ENCODE measurements at regions of chr6 and their contacts with region 1.

Region 1: GRCh38 chr6:144063744-144064401 is 31.5 kb downstream of the SF3B5 start:
- DNase-seq: peak; percentile 86
- H3K4me3 Mint-ChIP-seq: peak overlapping the region; percentile 75
- H3K27ac Mint-ChIP-seq: peak overlapping the region; percentile 43
- H3K4me1 Mint-ChIP-seq: peaks cover 40% of the 10 kb centered on the region
- H3K27me3 Mint-ChIP-seq: no peaks in the 10 kb centered on the region

Region 2: DNA sequence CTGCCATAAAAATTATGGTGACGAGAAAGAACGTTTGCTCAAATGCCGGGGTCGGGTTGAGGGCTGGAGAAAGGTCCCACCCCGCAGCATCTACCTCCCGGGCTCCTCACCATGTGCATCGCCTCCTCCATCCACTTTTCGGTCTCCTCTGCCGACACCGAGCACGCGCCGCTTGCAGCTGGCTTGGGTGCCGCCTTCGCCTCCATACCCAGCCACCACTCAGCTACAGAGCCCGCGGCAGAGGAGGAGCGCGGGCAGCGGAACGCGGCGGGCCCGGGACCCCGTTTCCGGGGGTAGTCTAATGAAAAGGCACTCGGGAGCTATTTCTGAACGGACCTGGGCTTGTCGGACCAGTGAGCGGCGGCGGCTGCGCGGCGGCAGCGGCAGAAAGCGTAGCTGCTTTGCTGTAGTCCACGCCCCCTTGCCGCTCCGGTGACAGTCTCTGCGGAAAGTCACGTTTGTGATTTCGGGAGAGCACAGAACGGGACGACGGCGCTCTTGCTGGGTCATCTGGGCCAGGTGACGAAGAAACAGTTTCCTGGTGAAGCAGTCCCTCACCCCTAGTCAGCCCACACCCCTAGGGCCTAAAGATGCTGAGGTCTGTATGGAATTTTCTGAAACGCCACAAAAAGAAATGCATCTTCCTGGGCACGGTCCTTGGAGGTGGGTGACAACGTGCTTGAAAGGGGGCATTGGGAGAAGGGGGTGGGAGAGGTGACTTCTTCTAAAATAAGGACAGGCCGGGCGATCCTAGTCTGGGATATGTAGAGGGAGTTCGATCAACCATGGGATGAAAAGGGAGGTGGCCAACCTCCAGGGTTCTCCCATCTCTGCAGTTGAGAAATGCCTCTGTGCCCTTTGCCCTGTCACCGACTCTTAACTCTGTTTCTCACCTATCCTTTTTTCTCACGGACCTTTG is 613.2 kb before region 1 on chr6 and contains the starts of genes ADAT2 and PEX3:
- CTCF ChIA-PET with region 1: no interaction called
- intact Hi-C with region 1: loop called (anchors 5 kb)
- DNase-seq: peak; percentile 96
- H3K4me3 Mint-ChIP-seq: peak within 1 kb of the TSS; percentile 100
- H3K27ac Mint-ChIP-seq: peak within 1 kb of the TSS; percentile 97
- H3K4me1 Mint-ChIP-seq: peaks cover 50% of the 10 kb centered on the region
- H3K27me3 Mint-ChIP-seq: no peaks in the 10 kb centered on the region
- total RNA-seq, gene ADAT2: 36.8 to 39.5 TPM
- total RNA-seq, gene PEX3: 10.8 to 11.9 TPM

Region 3: GRCh38 chr6:144008120-144008811 is 55.6 kb before region 1 on chr6 and contains the start of gene PLAGL1:
- CTCF ChIA-PET with region 1: no interaction called
- intact Hi-C with region 1: no loop called
- DNase-seq: peak; percentile 17
- H3K4me3 Mint-ChIP-seq: peak within 1 kb of the TSS; percentile 67
- H3K27ac Mint-ChIP-seq: no peak within 1 kb of the TSS
- H3K4me1 Mint-ChIP-seq: peaks cover 8% of the 10 kb centered on the region
- H3K27me3 Mint-ChIP-seq: peaks cover 15% of the 10 kb centered on the region
- total RNA-seq, gene PLAGL1: 10.0 to 11.7 TPM

Region 4: DNA sequence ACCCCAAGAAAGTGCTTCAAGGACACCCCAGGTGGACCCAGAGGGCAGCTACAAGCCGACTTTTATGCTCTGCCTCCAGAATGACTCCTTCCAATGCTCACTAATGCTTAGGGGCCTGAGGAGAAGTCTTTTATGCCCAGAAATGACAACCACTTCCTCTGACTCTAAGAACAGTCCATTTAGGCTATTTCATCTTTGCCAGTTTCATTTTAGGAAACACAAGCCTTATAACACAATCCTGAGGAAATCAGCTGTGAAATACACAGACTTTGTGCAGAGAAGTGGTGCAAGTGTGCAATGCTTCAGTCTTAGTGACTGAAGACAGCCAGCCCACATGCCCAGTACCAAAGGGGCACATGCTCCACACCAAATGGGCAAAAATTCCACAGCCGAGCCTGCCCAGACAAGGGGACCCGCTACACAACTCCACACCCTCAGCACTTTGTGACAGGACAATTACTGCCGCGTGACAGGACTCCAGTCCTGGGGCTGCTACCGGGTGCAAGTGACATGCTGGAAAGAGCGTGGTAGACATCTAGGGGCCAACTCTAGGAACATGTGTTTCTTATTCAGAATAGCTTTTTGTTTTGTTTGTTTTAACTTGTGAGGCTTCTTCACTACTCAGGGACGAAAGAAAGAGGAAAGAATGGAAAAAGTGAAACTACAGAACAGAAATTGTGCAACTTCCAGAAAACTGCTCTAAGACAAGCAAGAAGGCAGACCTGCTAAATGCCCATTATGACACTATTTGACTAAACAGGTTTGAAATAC is 27.6 kb before region 1 on chr6:
- CTCF ChIA-PET with region 1: interaction called, 3 read pairs
- intact Hi-C with region 1: loop called (anchors 1 kb)
- DNase-seq: peak; percentile 50
- H3K4me3 Mint-ChIP-seq: peak overlapping the region; percentile 30
- H3K27ac Mint-ChIP-seq: no peak overlapping the region
- H3K4me1 Mint-ChIP-seq: peaks cover 14% of the 10 kb centered on the region
- H3K27me3 Mint-ChIP-seq: no peaks in the 10 kb centered on the region

Region 5: DNA sequence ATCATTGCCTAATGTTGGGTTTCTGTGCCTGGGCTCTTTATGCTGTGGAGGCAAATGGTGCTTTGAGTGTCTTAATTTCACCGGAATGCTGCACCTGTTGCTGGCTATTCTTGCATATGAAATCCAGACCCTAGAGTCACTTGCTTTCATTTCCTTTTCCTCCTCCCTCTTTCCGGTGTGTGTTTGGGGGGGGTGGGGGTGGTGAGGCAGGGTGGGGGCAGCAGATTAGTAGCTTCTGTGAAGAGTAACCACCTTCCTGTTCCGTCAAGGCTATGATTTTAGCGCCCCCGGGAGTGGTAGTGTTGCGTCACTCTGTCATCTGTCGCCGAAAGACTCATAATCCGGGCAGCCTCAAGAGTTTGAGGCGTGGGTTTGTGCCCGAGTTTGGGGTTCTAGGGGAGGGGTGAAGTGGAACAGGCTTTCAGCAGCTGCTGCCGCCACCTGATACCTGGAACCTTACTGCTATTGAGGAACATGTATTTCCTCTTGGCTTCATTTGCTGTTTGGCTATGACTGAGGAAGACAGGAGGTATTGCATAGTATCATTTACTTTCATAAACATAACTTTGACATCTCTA is 270.3 kb after region 1 on chr6:
- CTCF ChIA-PET with region 1: no interaction called
- intact Hi-C with region 1: loop called (anchors 2 kb)
- DNase-seq: peak; percentile 83
- H3K4me3 Mint-ChIP-seq: peak overlapping the region; percentile 59
- H3K27ac Mint-ChIP-seq: peak overlapping the region; percentile 50
- H3K4me1 Mint-ChIP-seq: peaks cover 45% of the 10 kb centered on the region
- H3K27me3 Mint-ChIP-seq: no peaks in the 10 kb centered on the region

Measured in activated naive CD4-positive, alpha-beta T cell treated with anti-CD3 and anti-CD28 coated beads for 36 hours (primary cell).